Sciatic nerve (tissue), 2 donors: ENCODE measurements at regions of chr16 and their contacts with region 1.

Region 1: GRCh38 chr16:3305109-3306068 is at the starts of genes TIGD7 and ZNF75A:
- DNase-seq: peak; percentile 91
- ATAC-seq: peak; percentile 100
- total RNA-seq, gene TIGD7: 9.9 TPM
- total RNA-seq, gene ZNF75A: 33.8 TPM

Region 2: DNA sequence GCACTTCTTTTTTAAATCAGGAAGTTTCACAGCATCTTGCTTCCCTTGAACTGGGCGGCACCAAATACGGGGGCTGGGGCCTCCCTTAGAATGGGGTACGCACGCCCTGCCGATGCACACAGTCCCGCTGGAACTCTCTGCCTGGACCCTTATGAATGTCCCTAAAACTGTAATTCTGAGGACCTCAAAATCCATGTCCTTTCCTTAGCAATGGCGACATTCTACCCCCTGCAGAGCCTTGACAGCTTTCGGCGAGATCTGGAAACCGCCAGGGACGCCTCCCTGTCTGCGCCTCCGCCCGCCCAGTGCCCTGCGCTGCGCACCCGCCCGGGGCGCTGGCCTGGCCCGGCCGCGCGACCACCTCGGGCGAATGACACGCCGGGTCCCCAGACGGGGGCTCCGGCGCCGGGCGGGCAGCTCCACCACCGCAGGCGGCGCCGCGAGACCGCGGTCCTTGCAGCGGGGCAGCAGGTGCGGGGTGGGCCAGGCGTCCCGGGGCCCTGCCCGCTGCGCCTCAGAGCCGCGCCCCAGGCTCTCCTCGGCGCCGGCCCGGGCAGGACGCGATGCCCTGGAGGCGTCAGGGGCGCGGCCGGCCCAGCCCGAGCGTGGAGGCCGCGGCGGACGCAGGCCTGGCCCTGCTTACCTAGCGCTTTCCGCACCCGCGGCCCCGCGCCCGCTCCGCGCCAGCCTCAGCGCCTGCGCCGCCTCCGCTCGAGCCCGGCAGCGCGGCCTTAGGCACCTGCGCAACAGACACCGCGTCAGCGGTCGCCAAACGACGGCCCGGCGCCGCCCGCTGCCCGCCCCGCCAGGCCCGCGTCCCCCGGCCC is 1479.3 kb before region 1 on chr16:
- intact Hi-C with region 1: no loop called
- DNase-seq: peak; percentile 67
- ATAC-seq: no peak

Region 3: DNA sequence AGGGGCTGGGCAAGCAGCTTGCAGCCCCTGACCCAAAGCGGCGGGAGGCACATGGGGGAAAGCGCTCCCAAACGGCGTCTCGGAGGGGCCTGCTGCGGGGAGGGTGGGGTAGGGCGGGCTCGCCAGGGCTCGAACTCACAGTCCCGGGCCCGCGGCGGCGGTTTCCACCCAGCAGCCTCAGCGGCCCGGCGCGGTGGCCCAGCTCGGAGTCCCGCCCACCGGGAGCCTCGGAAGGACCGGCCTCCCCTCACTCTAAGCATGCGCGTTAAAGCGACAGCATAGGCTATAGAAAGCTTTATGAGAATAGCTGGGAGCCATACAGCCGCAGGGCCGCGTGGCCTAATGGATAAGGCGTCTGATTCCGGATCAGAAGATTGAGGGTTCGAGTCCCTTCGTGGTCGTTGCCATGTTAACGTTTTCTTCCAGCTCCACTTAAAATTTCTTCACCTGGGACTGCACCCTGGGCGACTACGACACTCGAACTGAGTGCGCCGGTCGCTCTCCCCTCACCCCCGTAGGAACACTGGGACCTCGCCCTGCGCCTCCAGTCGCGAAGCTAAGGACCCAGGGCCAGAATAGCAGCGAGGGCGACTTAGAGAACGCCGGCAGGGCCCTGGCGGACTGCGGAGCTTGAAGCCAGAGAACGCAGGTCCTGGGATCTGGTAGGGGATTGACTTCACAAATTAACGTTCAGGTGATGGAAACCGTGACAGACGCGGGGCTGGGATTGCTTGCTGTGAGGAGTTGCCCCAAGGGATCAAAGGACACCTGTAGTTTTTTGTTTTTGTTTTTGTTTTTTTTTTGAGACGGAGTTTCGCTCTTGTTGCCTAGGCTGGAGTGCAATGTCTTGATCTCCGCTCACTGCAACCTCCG is 154.8 kb before region 1 on chr16:
- intact Hi-C with region 1: no loop called
- DNase-seq: peak; percentile 97
- ATAC-seq: peak; percentile 93

Region 4: GRCh38 chr16:3400779-3401688 is 95.6 kb after region 1 on chr16 and contains the starts of genes ZNF174 and ZSCAN32:
- intact Hi-C with region 1: loop called (anchors 10 kb)
- DNase-seq: peak; percentile 99
- ATAC-seq: peak; percentile 100
- total RNA-seq, gene ZNF174: 10.8 TPM
- total RNA-seq, gene ZSCAN32: 14.3 TPM